Body of pancreas (tissue), 4 donors: ENCODE measurements at regions of chr1 and their contacts with region 1.

Region 1: DNA sequence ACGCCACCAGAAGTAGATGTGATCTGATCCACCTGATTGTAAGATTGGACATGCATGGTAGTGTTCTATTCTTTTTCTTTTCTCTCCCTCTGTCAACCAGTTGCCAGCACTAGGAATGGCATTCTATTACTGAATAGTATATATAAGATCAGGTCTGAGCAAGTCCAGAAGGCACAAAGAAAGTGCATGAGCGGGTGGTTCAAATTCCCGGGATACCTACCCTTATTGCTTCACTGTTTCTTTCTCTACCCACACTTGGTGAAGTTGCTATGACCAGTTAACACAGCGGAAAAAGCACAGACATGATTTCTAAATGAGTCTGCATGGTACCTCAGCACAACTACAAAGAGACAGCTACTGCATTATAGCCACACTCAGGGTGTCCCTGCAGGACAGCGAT is 64.0 kb downstream of the SLC9A1 start:
- DNase-seq: no peak
- ATAC-seq: no peak
- H3K4me3 ChIP-seq: no peak overlapping the region
- H3K27ac ChIP-seq: no peak overlapping the region
- H3K4me1 ChIP-seq: no peaks in the 10 kb centered on the region
- H3K27me3 ChIP-seq: no peaks in the 10 kb centered on the region
- CTCF ChIP-seq: no peak
- POLR2A ChIP-seq: no peak

Region 2: DNA sequence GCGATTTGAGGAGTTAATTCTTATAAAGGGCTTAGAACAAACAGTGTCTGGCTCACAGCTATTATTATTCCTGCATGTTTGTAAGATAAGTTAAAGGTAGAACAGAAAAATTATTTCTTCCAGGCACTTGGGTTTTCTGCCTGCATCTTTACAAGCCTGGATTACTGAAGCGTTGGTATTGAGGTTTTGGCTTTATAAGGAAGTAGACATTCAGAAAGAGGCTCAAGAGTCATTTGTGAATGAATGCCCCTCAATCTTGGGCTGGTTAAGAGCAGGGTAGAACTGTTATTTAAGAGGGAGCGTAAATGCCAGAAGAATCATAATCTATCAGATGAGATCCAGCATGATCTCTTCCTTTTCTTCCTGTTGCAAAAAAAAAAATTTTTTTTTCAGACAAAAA is 472.4 kb before region 1 on chr1:
- intact Hi-C with region 1: no loop called
- DNase-seq: no peak
- ATAC-seq: no peak
- H3K4me3 ChIP-seq: no peak overlapping the region
- H3K27ac ChIP-seq: no peak overlapping the region
- H3K4me1 ChIP-seq: peaks cover 6% of the 10 kb centered on the region
- H3K27me3 ChIP-seq: no peaks in the 10 kb centered on the region
- CTCF ChIP-seq: no peak
- POLR2A ChIP-seq: no peak

Region 3: DNA sequence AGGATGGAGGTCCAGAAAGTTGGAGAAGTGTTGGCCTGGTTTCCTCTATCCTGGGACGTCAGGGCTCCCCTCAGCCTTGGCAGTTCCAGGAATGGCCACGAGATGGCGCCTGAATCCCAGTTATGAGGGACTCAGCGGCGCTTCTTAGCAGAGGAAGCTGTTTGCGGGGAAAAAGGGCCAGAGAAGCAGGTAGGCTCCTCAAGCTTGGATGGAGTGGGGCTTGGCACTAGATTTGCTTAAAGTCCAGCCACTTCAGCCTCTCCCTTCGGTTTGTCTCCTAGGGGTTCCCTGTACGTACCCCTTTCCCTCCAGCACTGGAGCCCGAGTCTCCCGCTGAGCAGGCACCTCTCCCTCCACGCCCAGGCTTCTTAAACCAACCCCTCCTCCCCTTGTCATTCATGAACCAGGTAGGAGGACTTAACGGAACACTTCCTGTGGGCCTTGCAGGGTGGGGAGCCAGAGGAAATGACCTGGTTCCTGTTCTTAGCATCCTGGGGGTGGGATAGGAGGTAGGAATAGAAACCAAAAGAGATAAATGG is 46.2 kb before region 1 on chr1:
- intact Hi-C with region 1: loop called (anchors 5 kb)
- DNase-seq: peak; percentile 88 to 93 (median 91)
- ATAC-seq: peak; percentile 94
- H3K4me3 ChIP-seq: no peak overlapping the region
- H3K27ac ChIP-seq: no peak overlapping the region
- H3K4me1 ChIP-seq: peaks cover 8% of the 10 kb centered on the region
- H3K27me3 ChIP-seq: no peaks in the 10 kb centered on the region
- CTCF ChIP-seq: peak; percentile 79 to 98 (median 97)
- POLR2A ChIP-seq: no peak